Caco-2 (cell line): ENCODE measurements at regions of chr19 and their contacts with region 1.

Region 1: GRCh38 chr19:36665832-36666231 is 805 bp downstream of the ZNF461 start:
- DNase-seq: no peak
- H3K4me3 ChIP-seq: peak overlapping the region; percentile 50
- H3K4me3 Mint-ChIP-seq: peak overlapping the region; percentile 98
- H3K27ac Mint-ChIP-seq: peak overlapping the region; percentile 91
- H3K4me1 ChIP-seq: no peaks in the 10 kb centered on the region
- H3K4me1 Mint-ChIP-seq: peaks cover 7% of the 10 kb centered on the region
- H3K27me3 ChIP-seq: no peaks in the 10 kb centered on the region
- H3K27me3 Mint-ChIP-seq: no peaks in the 10 kb centered on the region
- CTCF ChIP-seq: no peak

Region 2: GRCh38 chr19:36627057-36627456 is 38.8 kb before region 1 on chr19:
- CTCF ChIA-PET with region 1: no interaction called
- POLR2A ChIA-PET with region 1: no interaction called
- intact Hi-C with region 1: no loop called
- DNase-seq: no peak
- H3K4me3 ChIP-seq: no peak overlapping the region
- H3K4me3 Mint-ChIP-seq: no peak overlapping the region
- H3K27ac Mint-ChIP-seq: no peak overlapping the region
- H3K4me1 ChIP-seq: no peaks in the 10 kb centered on the region
- H3K4me1 Mint-ChIP-seq: no peaks in the 10 kb centered on the region
- H3K27me3 ChIP-seq: no peaks in the 10 kb centered on the region
- H3K27me3 Mint-ChIP-seq: no peaks in the 10 kb centered on the region
- CTCF ChIP-seq: no peak

Region 3: DNA sequence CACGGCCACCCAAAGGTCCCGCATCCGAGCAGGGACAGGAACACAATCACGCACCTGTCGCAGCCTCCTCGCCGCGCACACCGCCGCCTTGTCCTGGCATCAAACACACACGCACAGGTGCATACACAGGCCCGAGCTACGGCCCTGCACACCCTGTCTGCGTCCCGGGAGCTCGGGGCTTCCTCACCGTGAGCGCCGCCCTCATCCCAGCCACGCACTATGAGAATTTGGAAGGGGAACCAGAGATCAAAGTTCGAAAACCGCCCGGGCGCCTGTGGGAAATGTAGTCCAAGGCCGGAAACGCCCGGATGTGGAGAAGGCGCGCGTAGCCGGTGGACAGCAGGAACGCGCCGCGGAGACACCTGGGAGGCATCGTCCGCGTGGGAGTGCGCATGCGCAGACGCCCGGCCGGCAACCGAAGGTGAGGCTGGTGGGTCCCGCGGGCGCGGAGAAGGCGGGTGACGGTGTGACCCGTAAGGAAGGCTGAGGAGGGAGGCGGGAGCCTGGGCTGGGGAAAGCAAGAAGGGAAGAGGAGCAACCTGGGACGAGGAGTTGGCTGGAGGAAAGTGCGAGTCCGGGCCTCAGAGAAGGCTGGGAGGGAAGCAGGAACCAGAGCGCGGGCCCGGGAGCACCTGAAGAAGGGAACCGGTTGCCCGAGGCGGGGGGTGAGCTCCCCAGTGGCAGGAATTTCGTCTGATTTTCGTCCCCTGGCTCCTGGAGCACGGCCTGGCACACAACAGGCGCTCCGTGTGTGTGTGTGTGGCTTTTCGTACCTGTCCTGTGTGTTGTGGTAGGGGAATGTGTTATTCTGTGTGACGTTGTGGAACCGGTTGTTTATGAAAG is 21.6 kb after region 1 on chr19 and contains the start of gene ZNF567:
- CTCF ChIA-PET with region 1: interaction called, 4 read pairs
- POLR2A ChIA-PET with region 1: interaction called, 7 read pairs
- intact Hi-C with region 1: loop called (anchors 1 kb)
- DNase-seq: peak; percentile 98 to 99
- H3K4me3 ChIP-seq: peak within 1 kb of the TSS; percentile 93
- H3K4me3 Mint-ChIP-seq: peak within 1 kb of the TSS; percentile 94
- H3K27ac Mint-ChIP-seq: peak within 1 kb of the TSS; percentile 99
- H3K4me1 ChIP-seq: no peaks in the 10 kb centered on the region
- H3K4me1 Mint-ChIP-seq: peaks cover 8% of the 10 kb centered on the region
- H3K27me3 ChIP-seq: no peaks in the 10 kb centered on the region
- H3K27me3 Mint-ChIP-seq: no peaks in the 10 kb centered on the region
- CTCF ChIP-seq: peak in 1 of 2 experiments; percentile 23
- total RNA-seq, gene ZNF567: 8.6 and 9.0 TPM in 2 replicates

Region 4: DNA sequence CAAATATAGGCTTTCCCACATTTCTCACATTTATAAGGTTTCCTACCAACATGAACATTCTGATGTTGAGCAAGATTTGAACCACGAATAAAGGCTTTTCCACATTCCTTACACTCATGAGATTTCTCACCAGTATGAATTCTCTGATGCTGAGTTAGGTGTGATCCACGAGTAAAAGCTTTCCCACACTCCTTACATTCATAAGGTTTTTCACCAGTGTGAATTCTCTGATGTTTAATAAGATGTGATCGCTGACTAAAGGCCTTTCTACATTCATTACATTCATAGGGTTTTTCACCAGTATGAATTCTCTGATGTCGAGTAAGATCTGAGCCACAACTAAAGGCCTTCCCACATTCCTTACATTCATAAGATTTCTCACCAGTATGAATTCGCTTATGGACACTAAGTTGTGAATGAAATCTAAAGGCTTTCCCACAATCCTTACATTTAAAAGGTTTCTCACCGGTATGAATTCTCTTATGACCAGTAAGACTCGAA is 153.3 kb after region 1 on chr19:
- CTCF ChIA-PET with region 1: no interaction called
- POLR2A ChIA-PET with region 1: no interaction called
- intact Hi-C with region 1: no loop called
- DNase-seq: no peak
- H3K4me3 ChIP-seq: no peak overlapping the region
- H3K4me3 Mint-ChIP-seq: no peak overlapping the region
- H3K27ac Mint-ChIP-seq: no peak overlapping the region
- H3K4me1 ChIP-seq: no peaks in the 10 kb centered on the region
- H3K4me1 Mint-ChIP-seq: no peaks in the 10 kb centered on the region
- H3K27me3 ChIP-seq: no peaks in the 10 kb centered on the region
- H3K27me3 Mint-ChIP-seq: no peaks in the 10 kb centered on the region
- CTCF ChIP-seq: no peak